HEK293 (cell line): ENCODE measurements at regions of chr20 and their contacts with region 1.

Region 1: GRCh38 chr20:39049684-39050554 is 87.8 kb downstream of the DHX35 start:
- H3K4me3 ChIP-seq: peak overlapping the region; percentile 67
- H3K27ac ChIP-seq: no peak overlapping the region
- H3K4me1 ChIP-seq: no peaks in the 10 kb centered on the region
- CTCF ChIP-seq: peak; percentile 99

Region 2: GRCh38 chr20:38559764-38560163 is 490.2 kb before region 1 on chr20:
- CTCF ChIA-PET with region 1: no interaction called
- POLR2A ChIA-PET with region 1: no interaction called
- H3K4me3 ChIP-seq: no peak overlapping the region
- H3K27ac ChIP-seq: no peak overlapping the region
- H3K4me1 ChIP-seq: no peaks in the 10 kb centered on the region
- CTCF ChIP-seq: no peak

Region 3: GRCh38 chr20:38926142-38926933 is 123.6 kb before region 1 on chr20 and contains the start of gene FAM83D:
- CTCF ChIA-PET with region 1: interaction called, 75 read pairs
- POLR2A ChIA-PET with region 1: interaction called, 12 read pairs
- H3K4me3 ChIP-seq: peak within 1 kb of the TSS; percentile 86
- H3K27ac ChIP-seq: peak within 1 kb of the TSS; percentile 66; the same call in 1 of the 2 replicates
- H3K4me1 ChIP-seq: peaks cover 4% of the 10 kb centered on the region; the same call in 1 of the 2 replicates
- CTCF ChIP-seq: no peak

Region 4: GRCh38 chr20:39013662-39014109 is 36.2 kb before region 1 on chr20:
- CTCF ChIA-PET with region 1: interaction called, 21 read pairs
- POLR2A ChIA-PET with region 1: no interaction called
- H3K4me3 ChIP-seq: no peak overlapping the region
- H3K27ac ChIP-seq: no peak overlapping the region
- H3K4me1 ChIP-seq: no peaks in the 10 kb centered on the region
- CTCF ChIP-seq: no peak

Region 5: DNA sequence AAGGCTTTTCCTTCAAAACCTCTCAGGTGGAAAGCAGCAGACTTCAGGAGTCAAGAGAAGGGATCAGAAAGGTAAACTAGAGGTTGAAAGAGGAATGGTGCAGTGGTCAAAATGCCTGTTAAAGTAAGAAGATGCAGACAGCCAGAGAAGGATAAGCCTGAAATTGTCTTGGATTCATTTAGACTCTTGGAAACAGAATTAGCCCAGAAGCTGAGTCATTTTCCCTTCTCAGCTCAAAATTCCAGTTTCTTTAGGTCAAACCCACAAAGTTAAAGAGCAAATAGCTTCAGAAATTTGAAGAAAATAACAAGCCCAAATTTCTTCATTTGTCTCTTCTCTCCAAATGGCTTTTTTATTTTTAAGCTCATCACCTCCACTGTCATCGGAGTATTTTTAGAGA is 13.9 kb before region 1 on chr20:
- CTCF ChIA-PET with region 1: interaction called, 20 read pairs
- POLR2A ChIA-PET with region 1: no interaction called
- H3K4me3 ChIP-seq: no peak overlapping the region
- H3K27ac ChIP-seq: no peak overlapping the region
- H3K4me1 ChIP-seq: no peaks in the 10 kb centered on the region
- CTCF ChIP-seq: no peak

Region 6: DNA sequence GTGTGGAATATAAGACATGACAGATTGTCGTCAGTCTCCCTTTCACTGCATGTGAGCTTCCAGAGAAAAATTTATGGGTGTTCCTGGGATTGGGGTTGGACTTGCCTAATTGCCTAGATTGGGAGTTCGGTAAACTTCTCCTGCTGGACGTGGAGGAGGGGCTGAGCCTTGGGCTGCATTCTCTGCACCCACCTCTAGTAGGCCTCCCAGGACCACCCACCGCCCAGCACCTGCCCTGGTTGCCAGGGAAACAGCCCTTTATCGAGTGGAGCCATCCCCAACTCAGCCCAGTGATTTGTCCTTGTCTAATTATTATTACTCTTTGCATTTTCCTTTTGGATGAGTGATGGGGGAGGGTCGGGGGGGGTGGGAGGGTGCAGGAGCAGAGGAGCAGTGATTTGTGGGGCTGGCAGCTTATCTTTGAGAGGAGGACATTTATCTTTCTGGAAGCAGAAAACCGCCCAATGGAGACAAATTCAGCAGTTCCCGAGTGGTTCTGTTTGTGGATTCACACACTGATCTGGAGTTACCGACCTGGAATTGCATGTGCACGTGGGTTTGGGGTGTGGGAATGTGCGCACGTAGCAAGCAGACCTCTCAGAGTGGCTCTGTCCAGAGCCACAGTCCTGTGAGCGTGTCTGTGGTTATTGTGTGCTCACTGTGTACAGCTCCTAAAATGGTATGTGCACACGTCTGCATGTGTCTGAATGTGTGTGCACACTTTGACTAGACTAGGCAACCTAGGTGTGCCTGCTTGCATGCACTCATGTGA is 16.7 kb after region 1 on chr20:
- CTCF ChIA-PET with region 1: interaction called, 14 read pairs
- POLR2A ChIA-PET with region 1: no interaction called
- H3K4me3 ChIP-seq: no peak overlapping the region
- H3K27ac ChIP-seq: no peak overlapping the region
- H3K4me1 ChIP-seq: no peaks in the 10 kb centered on the region
- CTCF ChIP-seq: no peak

Region 7: GRCh38 chr20:39075731-39076130 is 25.8 kb after region 1 on chr20:
- CTCF ChIA-PET with region 1: interaction called, 83 read pairs
- POLR2A ChIA-PET with region 1: no interaction called
- H3K4me3 ChIP-seq: no peak overlapping the region
- H3K27ac ChIP-seq: no peak overlapping the region
- H3K4me1 ChIP-seq: no peaks in the 10 kb centered on the region
- CTCF ChIP-seq: no peak

Region 8: GRCh38 chr20:39081255-39081654 is 31.3 kb after region 1 on chr20:
- CTCF ChIA-PET with region 1: interaction called, 83 read pairs
- POLR2A ChIA-PET with region 1: no interaction called
- H3K4me3 ChIP-seq: no peak overlapping the region
- H3K27ac ChIP-seq: no peak overlapping the region
- H3K4me1 ChIP-seq: no peaks in the 10 kb centered on the region
- CTCF ChIP-seq: peak; percentile 56; the same call in 1 of the 2 replicates